Breast epithelium (tissue), 4 donors: ENCODE measurements at regions of chr3 and their contacts with region 1.

Region 1: GRCh38 chr3:184314363-184314699 is at the start of gene EIF4G1:
- DNase-seq: peak; percentile 93 to 94
- H3K4me3 ChIP-seq: peak within 1 kb of the TSS; percentile 63 to 86 (median 64)
- H3K27ac ChIP-seq: peak within 1 kb of the TSS; percentile 95 to 99
- H3K4me1 ChIP-seq: peaks cover 5 to 31% of the 10 kb centered on the region in 2 donors
- H3K27me3 ChIP-seq: no peaks in the 10 kb centered on the region
- CTCF ChIP-seq: no peak
- POLR2A ChIP-seq: peak; percentile 52
- total RNA-seq, gene EIF4G1: 168 to 202 (median 196) TPM

Region 2: DNA sequence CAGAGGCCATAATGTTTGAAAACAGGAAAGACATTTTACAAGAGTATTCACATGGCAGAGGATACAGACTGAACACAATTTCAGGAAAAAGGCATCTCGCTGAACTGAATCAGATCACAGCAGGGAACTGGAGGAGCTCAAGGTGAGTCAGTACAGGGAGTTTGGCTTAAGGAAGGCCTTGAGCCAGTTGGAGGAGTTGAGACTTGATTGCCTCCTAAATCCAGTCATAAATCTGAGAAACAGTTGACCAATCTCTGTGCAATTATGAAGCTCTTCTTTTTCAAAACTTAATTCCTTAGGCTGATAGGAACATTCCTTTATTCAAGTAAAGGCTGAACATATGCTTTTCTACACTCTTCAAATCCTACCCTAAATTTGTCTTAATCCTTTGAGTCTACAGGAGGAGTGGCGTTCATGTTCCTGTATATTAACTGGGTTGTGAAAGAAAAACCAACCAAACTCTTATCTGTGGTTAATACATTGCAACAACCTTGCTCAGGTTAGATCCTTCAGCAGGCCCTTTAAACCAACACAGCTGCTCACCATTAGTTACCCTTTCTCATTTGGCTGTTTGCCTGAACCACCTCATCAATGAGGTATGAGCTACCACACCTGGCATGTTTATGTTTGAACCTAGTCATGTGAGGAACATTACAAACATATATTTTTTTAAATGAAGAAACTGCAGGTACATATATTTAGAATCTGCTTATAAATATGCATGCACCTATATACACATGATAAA is 1925.1 kb before region 1 on chr3:
- intact Hi-C with region 1: no loop called
- DNase-seq: no peak
- H3K4me3 ChIP-seq: no peak overlapping the region
- H3K27ac ChIP-seq: no peak overlapping the region
- H3K4me1 ChIP-seq: no peaks in the 10 kb centered on the region
- H3K27me3 ChIP-seq: no peaks in the 10 kb centered on the region
- CTCF ChIP-seq: no peak
- POLR2A ChIP-seq: no peak

Region 3: DNA sequence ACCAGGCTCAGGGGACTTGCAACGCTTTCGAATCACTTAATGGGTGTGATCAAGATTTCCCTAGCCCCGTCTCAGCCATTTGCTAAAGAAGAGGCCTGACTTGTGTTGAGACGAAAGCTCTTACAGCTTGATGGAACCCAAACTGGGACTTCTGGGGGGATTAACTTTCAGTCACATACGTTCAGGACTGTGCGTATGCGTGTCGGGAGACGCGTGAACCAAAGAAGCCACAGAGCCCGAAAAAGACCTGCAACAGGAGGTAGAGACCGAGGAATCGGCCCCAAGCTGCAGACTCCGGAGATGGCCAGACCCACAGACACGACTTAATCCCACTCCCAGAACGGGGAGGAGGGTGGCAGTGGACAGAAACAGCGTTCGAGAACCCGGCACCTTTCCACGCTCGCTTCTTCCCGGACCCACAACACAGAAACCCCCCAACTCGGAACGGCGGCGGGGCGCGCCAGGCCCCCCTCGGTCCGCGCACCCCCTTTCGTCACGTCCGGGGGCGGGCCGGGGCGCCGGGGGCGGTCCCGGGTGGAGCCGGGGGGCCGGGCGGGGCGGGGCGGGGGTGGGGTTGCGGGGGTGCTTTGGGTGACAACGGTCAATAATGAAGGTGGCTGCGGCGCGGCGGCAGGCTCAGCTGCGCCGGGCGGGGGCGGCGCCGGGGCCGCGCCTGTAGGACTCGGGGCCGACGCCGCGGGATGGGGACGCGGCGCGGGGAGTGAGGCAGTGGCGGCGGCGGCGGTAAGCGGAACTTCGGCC is 1521.2 kb before region 1 on chr3 and contains the start of gene ATP11B:
- intact Hi-C with region 1: loop called (anchors 10 kb)
- DNase-seq: peak; percentile 58 to 60
- H3K4me3 ChIP-seq: peak within 1 kb of the TSS; percentile 73 to 91 (median 81)
- H3K27ac ChIP-seq: peak within 1 kb of the TSS; percentile 95 to 96
- H3K4me1 ChIP-seq: peaks cover 0 to 5% of the 10 kb centered on the region in 2 donors
- H3K27me3 ChIP-seq: no peaks in the 10 kb centered on the region
- CTCF ChIP-seq: no peak
- POLR2A ChIP-seq: peak; percentile 63
- total RNA-seq, gene ATP11B: 70.8 to 92.8 (median 77.3) TPM